Naive thymus-derived CD4-positive, alpha-beta T cell (primary cell): ENCODE measurements at regions of chr7 and their contacts with region 1.

Region 1: GRCh38 chr7:8190119-8190895 is 71.7 kb downstream of the ICA1 start:
- DNase-seq: peak; percentile 11 to 73 (median 65)
- ATAC-seq: peak; percentile 89
- H3K4me3 ChIP-seq: no peak overlapping the region
- H3K4me3 Mint-ChIP-seq: no peak overlapping the region
- H3K27ac ChIP-seq: no peak overlapping the region
- H3K27ac Mint-ChIP-seq: peak overlapping the region in 2 of 9 donors; percentile 5 to 42
- H3K4me1 ChIP-seq: peaks cover 0 to 6% of the 10 kb centered on the region in 2 donors
- H3K4me1 Mint-ChIP-seq: peaks cover 7 to 33% (median 17%) of the 10 kb centered on the region in 7 donors
- H3K27me3 ChIP-seq: no peaks in the 10 kb centered on the region
- H3K27me3 Mint-ChIP-seq: peaks cover 0 to 10% (median 8%) of the 10 kb centered on the region in 5 donors

Region 2: GRCh38 chr7:7681179-7681935 is 508.9 kb before region 1 on chr7:
- CTCF ChIA-PET with region 1: interaction called, 29 read pairs
- POLR2A ChIA-PET with region 1: interaction called, 3 read pairs
- intact Hi-C with region 1: loop called (anchors 1 kb)
- DNase-seq: peak in 7 of 9 donors; percentile 37 to 66 (median 58)
- ATAC-seq: peak; percentile 84
- H3K4me3 ChIP-seq: no peak overlapping the region
- H3K4me3 Mint-ChIP-seq: peak overlapping the region in 5 of 10 donors; percentile 8 to 56 (median 25)
- H3K27ac ChIP-seq: no peak overlapping the region
- H3K27ac Mint-ChIP-seq: peak overlapping the region; percentile 1 to 76 (median 18)
- H3K4me1 ChIP-seq: peaks cover 0 to 15% of the 10 kb centered on the region in 2 donors
- H3K4me1 Mint-ChIP-seq: peaks cover 11 to 48% (median 37%) of the 10 kb centered on the region in 7 donors
- H3K27me3 ChIP-seq: no peaks in the 10 kb centered on the region
- H3K27me3 Mint-ChIP-seq: no peaks in the 10 kb centered on the region

Region 3: GRCh38 chr7:7920481-7920880 is 269.8 kb before region 1 on chr7:
- CTCF ChIA-PET with region 1: no interaction called
- POLR2A ChIA-PET with region 1: no interaction called
- intact Hi-C with region 1: loop called in 1 of 2 experiments (anchors 5 kb)
- DNase-seq: peak in 3 of 9 donors; percentile 5 to 13 (median 7)
- ATAC-seq: peak; percentile 44
- H3K4me3 ChIP-seq: peak overlapping the region; percentile 26
- H3K4me3 Mint-ChIP-seq: peak overlapping the region in 8 of 10 donors; percentile 60 to 83 (median 70)
- H3K27ac ChIP-seq: no peak overlapping the region
- H3K27ac Mint-ChIP-seq: peak overlapping the region in 2 of 9 donors; percentile 18 to 71
- H3K4me1 ChIP-seq: peaks cover 0 to 8% of the 10 kb centered on the region in 2 donors
- H3K4me1 Mint-ChIP-seq: peaks cover 14 to 33% (median 18%) of the 10 kb centered on the region in 7 donors
- H3K27me3 ChIP-seq: no peaks in the 10 kb centered on the region
- H3K27me3 Mint-ChIP-seq: no peaks in the 10 kb centered on the region

Region 4: DNA sequence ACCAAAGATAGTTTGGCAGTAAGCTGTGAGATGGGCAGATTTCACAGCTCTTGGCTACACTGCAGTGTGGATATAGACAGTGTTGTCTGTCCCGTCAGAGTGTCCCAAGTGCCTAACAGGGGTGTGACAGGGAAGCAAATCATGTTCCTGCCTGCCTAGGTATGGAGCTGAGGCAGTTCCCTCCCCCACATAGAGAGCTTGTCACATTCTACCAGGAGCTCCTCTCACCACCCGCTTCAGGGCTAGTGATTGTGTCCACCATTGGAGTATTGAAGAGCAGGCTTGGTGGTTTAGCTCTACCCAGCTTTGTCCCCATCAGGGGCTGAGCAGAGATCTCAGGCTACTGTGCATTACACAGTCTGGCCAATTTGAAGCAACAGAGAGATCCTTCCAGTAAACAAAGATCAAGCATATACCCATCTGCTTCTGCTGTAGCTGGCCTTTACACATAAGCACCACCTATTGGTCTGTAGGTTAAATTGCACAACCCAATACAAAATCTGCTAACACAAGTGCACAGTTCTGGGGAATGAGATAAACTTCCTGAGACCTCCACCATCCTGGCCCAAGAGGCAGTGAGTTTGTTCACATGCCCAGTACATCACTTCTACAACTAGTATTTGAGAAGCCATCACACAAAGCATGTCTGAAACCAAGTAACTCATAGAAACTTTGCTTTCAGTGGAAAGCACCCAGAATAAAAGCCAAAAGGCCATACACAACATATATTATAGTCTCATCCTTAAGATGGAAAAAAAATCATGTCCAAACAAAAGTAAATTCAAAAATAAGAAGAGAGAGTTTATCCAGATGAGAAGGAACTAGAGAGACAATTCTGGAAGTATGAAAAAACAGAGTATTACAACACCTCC is 154.4 kb before region 1 on chr7:
- CTCF ChIA-PET with region 1: interaction called, 16 read pairs
- POLR2A ChIA-PET with region 1: no interaction called
- intact Hi-C with region 1: loop called (anchors 1 to 5 kb)
- DNase-seq: peak in 7 of 9 donors; percentile 13 to 51 (median 36)
- ATAC-seq: peak; percentile 96
- H3K4me3 ChIP-seq: no peak overlapping the region
- H3K4me3 Mint-ChIP-seq: no peak overlapping the region
- H3K27ac ChIP-seq: no peak overlapping the region
- H3K27ac Mint-ChIP-seq: peak overlapping the region in 8 of 9 donors; percentile 21 to 83 (median 58)
- H3K4me1 ChIP-seq: peaks cover 5 to 6% of the 10 kb centered on the region in 2 donors
- H3K4me1 Mint-ChIP-seq: peaks cover 9 to 28% (median 19%) of the 10 kb centered on the region in 7 donors
- H3K27me3 ChIP-seq: no peaks in the 10 kb centered on the region
- H3K27me3 Mint-ChIP-seq: no peaks in the 10 kb centered on the region

Region 5: DNA sequence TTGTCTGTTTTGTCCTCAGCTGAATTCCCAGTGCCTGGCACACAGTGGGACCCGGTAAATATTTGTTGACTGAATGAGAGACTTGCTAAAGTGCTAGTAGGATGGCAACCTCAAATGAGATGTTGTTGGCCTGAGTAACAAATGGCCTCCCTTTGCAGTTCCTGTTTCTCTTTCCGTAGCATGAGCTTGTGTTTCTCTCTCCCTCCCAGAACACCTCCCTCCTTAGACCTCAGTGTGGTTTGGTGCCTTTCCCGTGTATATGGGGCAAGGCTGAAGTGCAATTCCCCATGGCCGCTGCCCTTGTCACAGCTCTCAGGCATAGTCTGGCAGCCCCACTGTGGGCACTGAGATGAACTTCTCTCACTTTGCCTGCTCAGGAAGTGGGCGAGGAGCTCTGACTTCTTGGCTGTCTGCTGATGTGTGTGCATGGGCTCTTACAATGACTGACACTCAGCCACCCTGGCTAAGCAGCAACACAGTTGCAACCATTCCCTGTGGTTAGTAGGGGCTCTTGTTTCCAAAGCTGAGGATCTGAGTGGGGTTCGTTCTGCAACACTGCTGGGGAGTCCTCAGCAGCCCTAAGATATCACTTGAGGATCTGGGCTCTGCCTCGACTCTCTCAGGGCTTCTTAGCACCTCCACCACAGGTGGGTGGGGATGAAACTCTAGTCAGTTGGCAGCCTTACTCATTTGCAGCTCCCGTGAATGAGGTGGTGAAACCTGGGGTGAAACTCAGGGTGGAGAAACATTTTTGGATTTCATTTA is 64.4 kb before region 1 on chr7:
- CTCF ChIA-PET with region 1: interaction called, 24 read pairs
- POLR2A ChIA-PET with region 1: interaction called, 8 read pairs
- intact Hi-C with region 1: loop called in 1 of 2 experiments (anchors 1 kb)
- DNase-seq: peak; percentile 47 to 83 (median 77)
- ATAC-seq: peak; percentile 95
- H3K4me3 ChIP-seq: peak overlapping the region; percentile 9
- H3K4me3 Mint-ChIP-seq: peak overlapping the region; percentile 59 to 83 (median 75)
- H3K27ac ChIP-seq: peak overlapping the region; percentile 70
- H3K27ac Mint-ChIP-seq: peak overlapping the region; percentile 92 to 100 (median 99)
- H3K4me1 ChIP-seq: peaks cover 56 to 69% of the 10 kb centered on the region in 2 donors
- H3K4me1 Mint-ChIP-seq: peaks cover 56 to 88% (median 77%) of the 10 kb centered on the region in 7 donors
- H3K27me3 ChIP-seq: no peaks in the 10 kb centered on the region
- H3K27me3 Mint-ChIP-seq: no peaks in the 10 kb centered on the region

Region 6: GRCh38 chr7:8176370-8177081 is 13.8 kb before region 1 on chr7:
- CTCF ChIA-PET with region 1: interaction called, 4 read pairs
- POLR2A ChIA-PET with region 1: interaction called, 6 read pairs
- intact Hi-C with region 1: loop called in 1 of 2 experiments (anchors 1 kb)
- DNase-seq: peak; percentile 20 to 74 (median 70)
- ATAC-seq: peak; percentile 91
- H3K4me3 ChIP-seq: peak overlapping the region; percentile 44
- H3K4me3 Mint-ChIP-seq: peak overlapping the region; percentile 73 to 86 (median 77)
- H3K27ac ChIP-seq: peak overlapping the region; percentile 72
- H3K27ac Mint-ChIP-seq: peak overlapping the region; percentile 88 to 97 (median 96)
- H3K4me1 ChIP-seq: peaks cover 48 to 50% of the 10 kb centered on the region in 2 donors
- H3K4me1 Mint-ChIP-seq: peaks cover 36 to 70% (median 67%) of the 10 kb centered on the region in 7 donors
- H3K27me3 ChIP-seq: no peaks in the 10 kb centered on the region
- H3K27me3 Mint-ChIP-seq: no peaks in the 10 kb centered on the region